Naive thymus-derived CD8-positive, alpha-beta T cell (primary cell): ENCODE measurements at regions of chr2 and their contacts with region 1.

Region 1: DNA sequence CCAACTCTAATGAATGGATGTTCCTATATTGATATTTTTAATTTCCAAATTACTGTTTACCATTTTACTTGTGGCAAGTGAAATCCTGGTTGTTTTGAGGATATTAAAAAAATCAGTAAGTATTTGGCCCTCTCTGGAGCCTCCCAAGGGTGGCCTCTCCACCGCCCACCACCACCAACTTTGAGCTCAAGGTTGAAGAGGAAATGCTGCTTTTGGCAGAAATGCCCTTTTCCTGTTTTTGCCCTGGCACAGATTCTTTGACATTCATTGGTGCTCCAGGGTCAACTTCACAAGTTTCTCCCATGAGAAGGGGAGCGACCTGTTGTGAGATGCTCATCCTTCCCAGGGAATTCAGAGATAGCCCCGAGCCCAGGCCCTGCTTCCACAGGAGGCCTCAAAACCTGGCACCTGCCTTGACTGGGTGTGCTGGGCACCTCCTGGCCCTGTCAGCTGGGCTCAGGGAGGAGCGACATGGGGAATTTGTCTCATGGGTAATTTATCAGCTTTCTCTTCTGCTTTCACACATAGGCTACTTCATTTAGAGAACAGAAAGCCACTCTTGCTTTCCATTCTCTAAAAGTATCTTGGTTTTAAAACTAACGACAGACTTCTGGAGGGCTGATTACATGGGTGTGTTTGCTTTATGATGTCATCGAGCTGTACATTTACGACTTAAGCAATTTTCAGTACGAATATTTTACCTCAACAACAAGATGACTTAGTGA is 6.9 kb downstream of the CD8A start:
- DNase-seq: peak in 4 of 10 donors; percentile 45 to 76 (median 62)
- ATAC-seq: peak; percentile 2 to 9
- H3K4me3 Mint-ChIP-seq: peak overlapping the region; percentile 2 to 95 (median 59)
- H3K27ac Mint-ChIP-seq: peak overlapping the region; percentile 96 to 100 (median 100)
- H3K4me1 Mint-ChIP-seq: peaks cover 36 to 83% (median 78%) of the 10 kb centered on the region in 4 donors
- H3K27me3 Mint-ChIP-seq: peaks cover 0 to 7% (median 0%) of the 10 kb centered on the region in 5 donors

Region 2: GRCh38 chr2:86598966-86599365 is 184.8 kb before region 1 on chr2:
- POLR2A ChIA-PET with region 1: no interaction called
- DNase-seq: no peak
- ATAC-seq: no peak
- H3K4me3 Mint-ChIP-seq: no peak overlapping the region
- H3K27ac Mint-ChIP-seq: peak overlapping the region in 3 of 10 donors; percentile 5 to 54 (median 11)
- H3K4me1 Mint-ChIP-seq: peaks cover 0 to 4% (median 0%) of the 10 kb centered on the region in 4 donors
- H3K27me3 Mint-ChIP-seq: peaks cover 0 to 2% (median 0%) of the 10 kb centered on the region in 5 donors

Region 3: GRCh38 chr2:86704459-86704971 is 79.3 kb before region 1 on chr2:
- POLR2A ChIA-PET with region 1: no interaction called
- DNase-seq: no peak
- ATAC-seq: no peak
- H3K4me3 Mint-ChIP-seq: no peak overlapping the region
- H3K27ac Mint-ChIP-seq: no peak overlapping the region
- H3K4me1 Mint-ChIP-seq: no peaks in the 10 kb centered on the region
- H3K27me3 Mint-ChIP-seq: no peaks in the 10 kb centered on the region

Region 4: DNA sequence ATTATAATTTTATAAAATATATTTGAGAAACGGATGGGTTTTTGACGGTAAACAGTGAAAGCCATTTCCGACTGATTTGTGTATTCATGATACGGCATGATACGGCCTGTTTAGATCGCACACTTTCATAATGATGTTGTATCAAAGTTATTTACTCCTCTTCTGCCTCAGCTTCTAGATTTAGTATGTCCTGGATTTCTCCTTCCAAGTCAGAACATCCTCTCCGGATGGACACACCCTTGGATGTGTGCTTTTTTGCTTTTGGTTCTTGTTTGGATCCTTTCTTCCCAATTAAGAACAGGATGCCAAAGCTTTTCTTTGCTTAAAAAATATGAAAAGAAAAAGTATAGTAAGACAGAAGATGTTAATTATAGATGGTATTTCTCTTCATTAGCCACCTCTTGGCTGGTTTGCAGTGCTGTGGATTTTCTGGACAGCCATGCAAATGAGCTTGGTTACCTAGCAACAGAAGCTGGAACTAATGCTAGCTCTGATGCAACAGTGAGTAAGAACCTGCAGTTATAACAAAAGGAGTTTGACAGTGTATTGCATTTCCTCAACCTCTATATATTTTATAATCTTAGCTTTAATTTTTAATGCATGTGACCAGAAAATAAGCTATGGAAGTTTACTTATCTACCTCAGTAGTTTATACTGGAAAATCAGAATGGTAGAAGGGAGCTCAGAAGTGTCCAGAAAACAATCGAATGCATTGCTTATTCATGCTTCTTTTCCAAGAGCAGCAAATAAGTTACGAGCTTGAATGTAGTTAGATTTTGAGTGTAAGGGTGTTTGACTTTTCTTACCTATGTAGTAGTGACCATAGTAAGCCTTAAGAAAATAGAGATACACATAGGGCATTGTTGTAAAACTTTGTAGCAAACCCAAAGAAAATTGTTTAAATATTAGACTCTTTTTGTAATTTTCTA is 35.8 kb before region 1 on chr2:
- POLR2A ChIA-PET with region 1: no interaction called
- DNase-seq: no peak
- ATAC-seq: no peak
- H3K4me3 Mint-ChIP-seq: no peak overlapping the region
- H3K27ac Mint-ChIP-seq: peak overlapping the region in 3 of 10 donors; percentile 15 to 37 (median 37)
- H3K4me1 Mint-ChIP-seq: peaks cover 27 to 67% (median 54%) of the 10 kb centered on the region in 4 donors
- H3K27me3 Mint-ChIP-seq: no peaks in the 10 kb centered on the region

Region 5: GRCh38 chr2:86764661-86765307 is 19.0 kb before region 1 on chr2:
- POLR2A ChIA-PET with region 1: interaction called, 61 read pairs
- DNase-seq: peak in 9 of 10 donors; percentile 37 to 77 (median 63)
- ATAC-seq: peak; percentile 74 to 75
- H3K4me3 Mint-ChIP-seq: peak overlapping the region in 4 of 10 donors; percentile 11 to 31 (median 19)
- H3K27ac Mint-ChIP-seq: peak overlapping the region; percentile 20 to 90 (median 82)
- H3K4me1 Mint-ChIP-seq: peaks cover 20 to 50% (median 28%) of the 10 kb centered on the region in 4 donors
- H3K27me3 Mint-ChIP-seq: no peaks in the 10 kb centered on the region

Region 6: GRCh38 chr2:86769838-86770237 is 13.9 kb before region 1 on chr2:
- POLR2A ChIA-PET with region 1: interaction called, 61 read pairs
- DNase-seq: no peak
- ATAC-seq: no peak
- H3K4me3 Mint-ChIP-seq: no peak overlapping the region
- H3K27ac Mint-ChIP-seq: peak overlapping the region in 2 of 10 donors; percentile 63 to 72
- H3K4me1 Mint-ChIP-seq: peaks cover 6 to 33% (median 16%) of the 10 kb centered on the region in 4 donors
- H3K27me3 Mint-ChIP-seq: no peaks in the 10 kb centered on the region